Left ventricle myocardium inferior (tissue), 1 donor: ENCODE measurements at regions of chr1 and their contacts with region 1.

Region 1: GRCh38 chr1:150529017-150529416 is 13.5 kb downstream of the FALEC start:
- DNase-seq: no peak
- H3K4me3 ChIP-seq: no peak overlapping the region
- H3K27ac ChIP-seq: peak overlapping the region; percentile 44
- H3K4me1 ChIP-seq: peaks cover 30% of the 10 kb centered on the region
- H3K27me3 ChIP-seq: no peaks in the 10 kb centered on the region
- CTCF ChIP-seq: no peak

Region 2: DNA sequence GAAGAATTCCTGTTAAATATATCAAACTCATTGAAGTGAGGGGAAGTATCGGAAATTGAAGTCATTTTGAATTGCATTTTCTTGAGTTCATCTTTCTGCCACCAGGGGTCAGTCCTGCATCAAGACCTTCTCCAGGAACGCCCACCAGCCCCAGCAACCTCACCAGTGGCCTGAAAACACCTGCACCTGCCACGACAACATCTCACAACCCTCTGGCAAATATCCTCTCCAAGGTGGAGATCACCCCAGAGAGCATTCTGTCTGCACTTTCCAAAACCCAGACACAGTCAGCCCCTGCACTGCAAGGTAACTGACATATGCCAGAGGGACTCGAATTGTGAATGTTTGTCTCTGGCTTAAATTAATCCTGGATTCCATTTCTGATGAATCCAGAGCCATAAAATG is 64.6 kb before region 1 on chr1:
- intact Hi-C with region 1: no loop called
- DNase-seq: no peak
- H3K4me3 ChIP-seq: no peak overlapping the region
- H3K27ac ChIP-seq: no peak overlapping the region
- H3K4me1 ChIP-seq: peaks cover 3% of the 10 kb centered on the region
- H3K27me3 ChIP-seq: no peaks in the 10 kb centered on the region
- CTCF ChIP-seq: peak; percentile 84

Region 3: DNA sequence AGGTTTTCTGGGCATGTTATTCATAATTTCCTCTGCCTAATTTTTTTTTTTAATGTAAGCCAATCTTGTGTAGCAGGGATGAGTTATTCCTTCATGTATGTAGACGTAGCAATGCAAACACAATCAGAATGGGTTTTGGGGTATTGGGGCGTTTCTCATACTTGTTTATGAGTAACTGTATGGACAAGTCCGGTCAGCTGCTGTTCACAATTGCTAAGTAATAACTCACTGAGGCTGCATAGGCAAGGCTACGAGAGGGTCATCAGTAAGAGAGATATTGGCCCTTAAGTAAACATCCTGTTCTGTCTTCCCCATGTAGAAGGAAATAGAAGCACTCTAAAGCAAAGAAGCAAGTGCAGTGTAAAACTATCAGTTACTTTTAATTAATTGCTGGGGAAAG is 51.3 kb before region 1 on chr1:
- intact Hi-C with region 1: loop called (anchors 10 kb)
- DNase-seq: no peak
- H3K4me3 ChIP-seq: no peak overlapping the region
- H3K27ac ChIP-seq: peak overlapping the region; percentile 67
- H3K4me1 ChIP-seq: peaks cover 52% of the 10 kb centered on the region
- H3K27me3 ChIP-seq: no peaks in the 10 kb centered on the region
- CTCF ChIP-seq: no peak